Heart left ventricle (tissue), 16 donors: ENCODE measurements at regions of chr19 and their contacts with region 1.

Region 1: GRCh38 chr19:11798391-11799330 is at the start of gene ZNF491:
- DNase-seq: peak; percentile 93 to 96 (median 95)
- ATAC-seq: peak; percentile 99 to 100 (median 99)
- H3K4me3 ChIP-seq: peak within 1 kb of the TSS; percentile 51 to 93 (median 78)
- H3K27ac ChIP-seq: peak within 1 kb of the TSS; percentile 66 to 92 (median 82)
- H3K4me1 ChIP-seq: peaks cover 0 to 22% (median 12%) of the 10 kb centered on the region in 12 donors
- H3K27me3 ChIP-seq: no peaks in the 10 kb centered on the region
- CTCF ChIP-seq: peak in 8 of 12 donors; percentile 14 to 55 (median 39)
- POLR2A ChIP-seq: peak in 1 of 2 donors; percentile 91
- total RNA-seq, gene ZNF491: 0.91 to 3.4 (median 2.5) TPM

Region 2: GRCh38 chr19:11699931-11700794 is 98.5 kb before region 1 on chr19:
- intact Hi-C with region 1: no loop called
- DNase-seq: no peak
- ATAC-seq: no peak
- H3K4me3 ChIP-seq: no peak overlapping the region
- H3K27ac ChIP-seq: no peak overlapping the region
- H3K4me1 ChIP-seq: peaks cover 0 to 4% (median 2%) of the 10 kb centered on the region in 12 donors
- H3K27me3 ChIP-seq: no peaks in the 10 kb centered on the region
- CTCF ChIP-seq: peak; percentile 55 to 79 (median 66)
- POLR2A ChIP-seq: no peak

Region 3: GRCh38 chr19:11722414-11722813 is 76.2 kb before region 1 on chr19:
- intact Hi-C with region 1: no loop called
- DNase-seq: no peak
- ATAC-seq: no peak
- H3K4me3 ChIP-seq: no peak overlapping the region
- H3K27ac ChIP-seq: no peak overlapping the region
- H3K4me1 ChIP-seq: no peaks in the 10 kb centered on the region
- H3K27me3 ChIP-seq: no peaks in the 10 kb centered on the region
- CTCF ChIP-seq: no peak
- POLR2A ChIP-seq: no peak

Region 4: DNA sequence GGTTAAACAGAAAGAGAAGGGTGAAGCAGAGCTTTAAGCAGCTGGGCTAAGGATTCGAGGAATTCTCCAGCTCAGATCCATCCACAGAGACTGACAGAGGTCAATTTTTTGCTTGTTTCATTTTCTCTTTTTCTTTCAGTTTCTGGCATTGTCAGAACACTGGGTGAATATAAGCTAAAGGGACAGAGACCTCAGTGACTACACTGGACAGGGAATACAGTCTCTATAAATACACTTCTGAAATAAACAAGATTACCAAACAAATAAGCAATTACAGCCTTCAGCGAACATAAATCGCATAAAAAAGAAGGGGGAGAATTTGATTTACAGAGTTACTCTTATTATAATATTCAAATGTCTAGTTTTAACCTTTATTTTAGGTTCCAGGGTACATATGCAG is 35.5 kb before region 1 on chr19:
- intact Hi-C with region 1: no loop called
- DNase-seq: no peak
- ATAC-seq: no peak
- H3K4me3 ChIP-seq: no peak overlapping the region
- H3K27ac ChIP-seq: no peak overlapping the region
- H3K4me1 ChIP-seq: peaks cover 0 to 13% (median 6%) of the 10 kb centered on the region in 12 donors
- H3K27me3 ChIP-seq: peaks cover 0 to 6% (median 0%) of the 10 kb centered on the region in 9 donors
- CTCF ChIP-seq: no peak
- POLR2A ChIP-seq: no peak

Region 5: GRCh38 chr19:11814029-11814699 is 15.5 kb after region 1 on chr19 and contains the start of gene ZNF440:
- intact Hi-C with region 1: loop called in 2 of 10 experiments (anchors 1 to 2 kb)
- DNase-seq: peak; percentile 96 to 97 (median 97)
- ATAC-seq: peak; percentile 100
- H3K4me3 ChIP-seq: peak within 1 kb of the TSS; percentile 63 to 99 (median 86)
- H3K27ac ChIP-seq: peak within 1 kb of the TSS; percentile 43 to 97 (median 91)
- H3K4me1 ChIP-seq: peaks cover 0 to 21% (median 5%) of the 10 kb centered on the region in 12 donors
- H3K27me3 ChIP-seq: no peaks in the 10 kb centered on the region
- CTCF ChIP-seq: no peak
- POLR2A ChIP-seq: peak; percentile 43 to 96
- total RNA-seq, gene ZNF440: 2.5 to 6.6 (median 5.2) TPM

Region 6: DNA sequence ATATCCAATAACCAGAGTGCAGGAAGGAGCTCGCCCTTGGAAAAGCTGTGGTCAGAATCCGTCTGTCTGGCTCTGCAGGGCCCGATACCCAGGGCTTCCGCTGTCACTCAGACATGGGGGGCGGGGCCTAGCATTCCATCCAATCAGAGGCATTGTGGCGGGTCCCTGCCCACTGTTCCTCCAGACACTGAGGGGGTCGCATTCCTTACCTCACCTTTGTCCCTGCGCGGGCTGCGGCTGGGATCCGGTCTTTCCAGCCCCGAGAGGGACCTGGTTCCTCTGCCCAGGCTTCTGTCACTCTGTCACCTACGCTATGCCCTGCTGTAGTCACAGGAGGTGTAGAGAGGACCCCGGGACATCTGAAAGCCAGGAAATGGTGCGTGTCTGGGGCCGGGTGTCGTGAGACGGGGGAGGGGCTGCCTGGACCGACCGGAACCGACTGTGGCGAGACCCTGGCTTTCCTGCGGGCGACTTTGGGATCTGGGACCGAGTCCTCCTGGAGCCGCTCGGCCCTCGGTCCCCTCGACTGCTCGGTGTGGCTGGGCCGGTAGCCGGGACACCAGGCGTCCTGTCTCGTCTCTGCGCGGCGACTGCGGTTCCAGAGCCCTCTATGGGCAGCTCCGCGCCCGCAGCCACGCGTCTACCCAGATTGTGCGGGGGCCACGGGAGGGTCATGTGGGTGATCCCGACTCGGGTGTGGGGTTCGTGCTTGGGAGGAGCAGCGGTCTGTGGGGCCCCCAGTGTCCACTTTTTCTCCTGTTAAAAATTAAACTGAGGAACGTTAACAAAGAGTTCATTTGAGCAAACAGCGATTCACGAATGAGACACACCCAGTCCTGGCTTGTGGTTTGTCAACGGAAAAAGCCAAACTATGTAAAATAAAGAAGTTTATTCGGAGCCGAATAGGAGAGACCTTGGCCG is 89.2 kb after region 1 on chr19 and contains the start of gene ZNF69:
- intact Hi-C with region 1: loop called in 3 of 10 experiments (anchors 5 to 10 kb)
- DNase-seq: peak; percentile 88 to 94 (median 89)
- ATAC-seq: peak; percentile 95 to 100 (median 99)
- H3K4me3 ChIP-seq: peak within 1 kb of the TSS; percentile 66 to 85 (median 70)
- H3K27ac ChIP-seq: peak within 1 kb of the TSS; percentile 10 to 90 (median 84)
- H3K4me1 ChIP-seq: peaks cover 0 to 15% (median 9%) of the 10 kb centered on the region in 12 donors
- H3K27me3 ChIP-seq: no peaks in the 10 kb centered on the region
- CTCF ChIP-seq: peak in 4 of 12 donors; percentile 23 to 51 (median 33)
- POLR2A ChIP-seq: peak in 1 of 2 donors; percentile 44
- total RNA-seq, gene ZNF69: 2.8 to 5.4 (median 4.2) TPM

Region 7: GRCh38 chr19:11987405-11988281 is 189.0 kb after region 1 on chr19:
- intact Hi-C with region 1: loop called (anchors 1 to 5 kb)
- DNase-seq: peak; percentile 95 to 99 (median 97)
- ATAC-seq: peak; percentile 100
- H3K4me3 ChIP-seq: peak overlapping the region; percentile 59 to 96 (median 87)
- H3K27ac ChIP-seq: peak overlapping the region; percentile 55 to 95 (median 88)
- H3K4me1 ChIP-seq: peaks cover 0 to 11% (median 0%) of the 10 kb centered on the region in 12 donors
- H3K27me3 ChIP-seq: no peaks in the 10 kb centered on the region
- CTCF ChIP-seq: peak in 2 of 12 donors; percentile 2 to 8
- POLR2A ChIP-seq: peak in 1 of 2 donors; percentile 79